ENCODE measurements at regions of chr7 and their contacts with region 1.

Region 1: GRCh38 chr7:21427182-21427870 is 557 bp upstream of the SP4 start:
- DNase-seq: peak; percentile 100
- H3K4me3 Mint-ChIP-seq: peak overlapping the region; percentile 98
- H3K27ac Mint-ChIP-seq: peak overlapping the region; percentile 98
- H3K4me1 Mint-ChIP-seq: peaks cover 48% of the 10 kb centered on the region
- H3K27me3 Mint-ChIP-seq: no peaks in the 10 kb centered on the region

Region 2: DNA sequence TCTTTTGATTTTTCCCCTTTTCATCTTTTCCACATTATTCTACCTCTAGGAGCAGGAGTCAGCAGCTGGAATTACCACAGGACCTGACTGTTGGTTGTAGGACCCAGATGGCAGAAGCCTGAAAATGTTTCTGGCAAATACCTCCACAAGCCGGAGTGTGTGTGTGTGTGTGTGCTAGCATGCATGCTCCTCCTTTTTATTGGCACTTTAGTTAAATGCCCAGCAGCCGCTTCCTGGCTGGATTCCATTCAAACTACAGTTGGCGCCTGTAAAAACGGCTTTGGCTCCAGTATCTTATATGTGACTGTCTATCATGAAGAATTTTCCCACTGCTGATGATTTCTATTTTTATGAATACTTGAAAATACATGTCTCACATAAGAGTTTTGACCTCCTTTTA is 319.1 kb before region 1 on chr7:
- CTCF ChIA-PET with region 1: no interaction called
- POLR2A ChIA-PET with region 1: no interaction called
- DNase-seq: no peak
- H3K4me3 Mint-ChIP-seq: no peak overlapping the region
- H3K27ac Mint-ChIP-seq: no peak overlapping the region
- H3K4me1 Mint-ChIP-seq: no peaks in the 10 kb centered on the region
- H3K27me3 Mint-ChIP-seq: no peaks in the 10 kb centered on the region

Region 3: DNA sequence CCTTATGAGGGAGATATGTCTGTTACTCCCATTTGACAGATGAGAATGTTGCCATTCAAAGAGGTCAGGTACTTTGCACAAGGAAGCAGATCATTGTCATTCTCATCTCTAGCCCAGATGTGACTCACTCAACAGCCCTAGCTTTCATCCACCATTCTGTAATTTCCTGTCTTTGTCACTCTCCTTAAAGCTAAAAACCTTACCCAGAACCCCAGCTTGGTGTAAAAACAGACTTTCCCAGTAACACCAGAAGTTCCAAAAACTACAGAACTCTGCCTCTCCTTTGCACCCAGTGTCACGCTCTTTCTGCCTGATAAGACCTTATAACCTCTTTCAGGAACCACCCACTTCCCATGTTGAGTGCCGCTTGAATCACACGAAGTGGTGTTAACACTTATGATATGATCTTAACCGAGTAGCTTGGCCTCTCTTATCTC is 88.6 kb before region 1 on chr7:
- CTCF ChIA-PET with region 1: interaction called, 13 read pairs
- POLR2A ChIA-PET with region 1: interaction called, 24 read pairs
- DNase-seq: peak; percentile 78
- H3K4me3 Mint-ChIP-seq: peak overlapping the region; percentile 31
- H3K27ac Mint-ChIP-seq: peak overlapping the region; percentile 95
- H3K4me1 Mint-ChIP-seq: peaks cover 58% of the 10 kb centered on the region
- H3K27me3 Mint-ChIP-seq: no peaks in the 10 kb centered on the region

Region 4: DNA sequence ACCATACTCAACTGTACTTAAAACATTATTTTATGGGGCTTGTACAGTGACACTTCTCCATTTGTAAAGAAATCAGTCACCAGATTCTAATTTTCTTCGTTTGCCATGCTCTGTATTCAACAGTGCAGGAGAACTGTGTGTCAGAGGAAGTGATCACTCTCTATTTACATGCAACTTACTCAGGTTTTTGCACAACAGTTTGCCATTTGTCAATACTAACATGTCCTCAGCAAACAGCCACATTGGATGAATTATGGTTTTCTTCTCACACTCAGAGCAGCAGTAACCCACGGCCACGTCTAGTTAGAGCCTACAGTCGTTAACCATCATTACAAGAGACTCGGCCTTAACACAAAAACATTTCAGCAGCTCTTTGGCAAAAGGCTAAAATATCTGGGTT is 68.7 kb before region 1 on chr7:
- CTCF ChIA-PET with region 1: interaction called, 9 read pairs
- POLR2A ChIA-PET with region 1: interaction called, 82 read pairs
- DNase-seq: no peak
- H3K4me3 Mint-ChIP-seq: no peak overlapping the region
- H3K27ac Mint-ChIP-seq: peak overlapping the region; percentile 68
- H3K4me1 Mint-ChIP-seq: peaks cover 88% of the 10 kb centered on the region
- H3K27me3 Mint-ChIP-seq: no peaks in the 10 kb centered on the region

Region 5: GRCh38 chr7:21383227-21384220 is 43.8 kb before region 1 on chr7:
- CTCF ChIA-PET with region 1: interaction called, 14 read pairs
- POLR2A ChIA-PET with region 1: interaction called, 23 read pairs
- DNase-seq: no peak
- H3K4me3 Mint-ChIP-seq: peak overlapping the region; percentile 53
- H3K27ac Mint-ChIP-seq: peak overlapping the region; percentile 79
- H3K4me1 Mint-ChIP-seq: peaks cover 33% of the 10 kb centered on the region
- H3K27me3 Mint-ChIP-seq: no peaks in the 10 kb centered on the region

Region 6: GRCh38 chr7:21443149-21443841 is 16.0 kb after region 1 on chr7:
- CTCF ChIA-PET with region 1: interaction called, 7 read pairs
- POLR2A ChIA-PET with region 1: interaction called, 17 read pairs
- DNase-seq: no peak
- H3K4me3 Mint-ChIP-seq: no peak overlapping the region
- H3K27ac Mint-ChIP-seq: no peak overlapping the region
- H3K4me1 Mint-ChIP-seq: peaks cover 49% of the 10 kb centered on the region
- H3K27me3 Mint-ChIP-seq: no peaks in the 10 kb centered on the region

Measured in activated CD4-positive, alpha-beta memory T cell treated with anti-CD3 and anti-CD28 coated beads, Interleukin-2, amount 10 ng/mL, durations not matched to agents 7 days and 5 days (primary cell).